SK-N-SH (cell line): ENCODE measurements at regions of chr7 and their contacts with region 1.

Region 1: DNA sequence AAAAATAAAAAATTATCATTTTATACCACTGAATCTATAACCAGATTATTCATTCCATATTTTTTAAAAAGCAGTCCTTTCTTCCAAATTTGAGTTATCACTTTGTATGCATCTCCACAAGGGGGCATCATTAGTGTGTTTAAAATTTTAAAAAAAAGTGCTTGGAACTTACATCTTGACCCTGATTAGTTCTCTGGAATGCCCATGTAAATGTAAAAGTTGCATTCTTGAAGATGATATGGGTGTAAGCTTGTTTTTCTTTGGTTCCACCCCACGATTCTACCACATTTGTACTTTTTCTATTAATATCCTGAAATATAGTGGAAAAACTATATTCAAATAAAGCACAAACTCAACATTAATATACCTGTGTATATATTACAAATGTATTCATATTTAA is 144.9 kb downstream of the ELAPOR2 start:
- DNase-seq: no peak
- H3K4me3 ChIP-seq: no peak overlapping the region; a peak in 1 of 4 replicates
- H3K27ac ChIP-seq: peak overlapping the region in 1 of 2 experiments; percentile 85; a peak in 3 of 4 replicates
- H3K4me1 ChIP-seq: peaks cover 11 to 17% of the 10 kb centered on the region in 2 experiments; a peak in 2 of 4 replicates
- H3K27me3 ChIP-seq: no peaks in the 10 kb centered on the region
- CTCF ChIP-seq: peak; percentile 94
- EP300 ChIP-seq: no peak
- RAD21 ChIP-seq: peak; percentile 52

Region 2: DNA sequence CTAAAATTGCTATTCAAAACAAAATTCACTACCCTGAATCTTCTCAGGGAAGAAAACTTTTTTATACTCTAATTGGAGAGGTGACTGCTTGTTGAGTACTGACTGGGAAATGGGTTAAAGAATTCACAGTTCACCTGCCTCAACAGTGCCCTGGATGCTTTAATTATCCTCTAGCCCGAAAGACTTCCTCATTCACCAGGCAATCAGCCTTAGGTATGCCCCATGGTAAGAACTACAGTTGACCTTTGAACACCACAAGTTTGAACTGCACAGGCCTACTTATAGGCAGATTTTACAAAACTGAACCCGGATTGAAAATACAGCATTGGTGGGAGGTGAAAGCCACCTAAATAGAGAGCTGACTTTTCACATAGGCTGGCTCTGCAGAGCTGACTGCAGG is 30.4 kb before region 1 on chr7:
- CTCF ChIA-PET with region 1: no interaction called
- POLR2A ChIA-PET with region 1: no interaction called
- DNase-seq: no peak
- H3K4me3 ChIP-seq: no peak overlapping the region
- H3K27ac ChIP-seq: no peak overlapping the region
- H3K4me1 ChIP-seq: no peaks in the 10 kb centered on the region
- H3K27me3 ChIP-seq: no peaks in the 10 kb centered on the region
- CTCF ChIP-seq: no peak
- EP300 ChIP-seq: no peak
- RAD21 ChIP-seq: no peak

Region 3: DNA sequence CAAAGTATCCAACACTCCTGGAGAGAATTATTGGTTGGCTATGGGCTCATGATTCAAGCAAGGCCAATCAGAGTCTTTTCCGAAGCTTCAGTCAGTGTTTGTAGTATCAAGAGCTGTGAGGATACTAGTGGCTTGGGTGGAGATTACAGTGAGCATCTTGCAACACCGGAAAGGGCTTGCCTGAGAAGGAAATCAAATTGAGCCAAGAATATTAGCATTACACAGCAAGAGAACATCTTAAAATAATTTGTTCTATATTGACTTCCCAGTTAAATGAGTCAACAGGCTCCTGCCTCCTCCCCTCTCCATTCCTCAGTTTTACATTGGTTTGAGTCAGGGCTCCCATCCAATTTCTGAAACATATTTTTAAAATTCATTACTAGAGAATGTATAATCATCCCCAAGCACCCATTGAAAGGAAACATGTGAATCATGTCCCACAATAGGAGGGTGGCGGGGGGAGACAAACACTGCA is 17.5 kb after region 1 on chr7:
- CTCF ChIA-PET with region 1: interaction called, 45 read pairs
- POLR2A ChIA-PET with region 1: no interaction called
- DNase-seq: no peak
- H3K4me3 ChIP-seq: no peak overlapping the region
- H3K27ac ChIP-seq: peak overlapping the region; percentile 60 to 77
- H3K4me1 ChIP-seq: peaks cover 4 to 12% of the 10 kb centered on the region in 2 experiments; a peak in 3 of 4 replicates
- H3K27me3 ChIP-seq: no peaks in the 10 kb centered on the region
- CTCF ChIP-seq: no peak
- EP300 ChIP-seq: peak in 1 of 2 experiments; percentile 33; a peak in 1 of 4 replicates
- RAD21 ChIP-seq: no peak

Region 4: GRCh38 chr7:87100326-87100725 is 185.8 kb after region 1 on chr7:
- CTCF ChIA-PET with region 1: no interaction called
- POLR2A ChIA-PET with region 1: no interaction called
- DNase-seq: no peak
- H3K4me3 ChIP-seq: no peak overlapping the region
- H3K27ac ChIP-seq: no peak overlapping the region
- H3K4me1 ChIP-seq: no peaks in the 10 kb centered on the region
- H3K27me3 ChIP-seq: no peaks in the 10 kb centered on the region
- CTCF ChIP-seq: no peak
- EP300 ChIP-seq: no peak
- RAD21 ChIP-seq: no peak